ENCODE measurements at regions of chr4 and their contacts with region 1.

Region 1: DNA sequence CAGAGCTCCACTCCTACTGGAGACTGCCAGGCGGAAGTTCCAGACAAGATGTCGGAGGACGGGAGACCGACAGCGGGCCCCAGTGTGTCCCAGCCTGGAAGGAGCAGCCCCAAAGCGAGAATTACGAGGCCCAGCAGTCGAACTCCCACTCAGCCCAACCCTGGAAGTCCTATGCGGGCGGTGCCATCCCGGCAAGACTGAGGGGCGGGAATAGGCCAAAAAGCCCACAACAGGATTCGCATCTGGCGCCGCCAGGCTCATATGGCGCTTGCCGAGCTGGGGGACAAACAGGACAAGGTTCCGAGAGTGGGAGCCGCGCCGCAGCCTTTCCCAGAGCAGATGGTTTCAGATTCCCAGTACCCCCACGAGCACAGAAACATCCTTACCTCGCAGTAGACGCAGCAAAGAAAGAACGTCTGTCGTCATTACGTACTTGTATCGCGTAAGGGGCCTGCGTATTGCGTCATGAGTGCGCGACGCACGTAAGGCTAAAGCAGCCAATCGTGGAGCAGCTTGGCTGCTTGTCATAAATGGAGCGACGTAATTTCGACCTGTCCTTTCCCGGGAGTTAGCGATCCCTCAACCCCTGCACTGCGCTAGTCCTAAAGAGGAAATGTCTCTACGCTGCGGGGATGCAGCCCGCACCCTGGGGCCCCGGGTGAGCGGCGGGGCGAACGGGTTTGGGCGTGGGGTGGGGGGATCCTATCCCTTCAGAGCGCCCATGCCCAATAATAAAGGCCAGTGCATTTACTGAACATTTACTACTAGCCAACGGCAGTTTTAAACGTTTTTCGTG is at the starts of genes LIAS and RPL9:
- DNase-seq: peak; percentile 96
- H3K4me3 Mint-ChIP-seq: peak within 1 kb of the TSS; percentile 93
- H3K27ac Mint-ChIP-seq: peak within 1 kb of the TSS; percentile 97
- H3K4me1 Mint-ChIP-seq: peaks cover 48% of the 10 kb centered on the region
- H3K27me3 Mint-ChIP-seq: peaks cover 1% of the 10 kb centered on the region
- total RNA-seq, gene LIAS: 23.2 to 23.7 TPM
- total RNA-seq, gene RPL9: 2,178 to 2,222 TPM

Region 2: DNA sequence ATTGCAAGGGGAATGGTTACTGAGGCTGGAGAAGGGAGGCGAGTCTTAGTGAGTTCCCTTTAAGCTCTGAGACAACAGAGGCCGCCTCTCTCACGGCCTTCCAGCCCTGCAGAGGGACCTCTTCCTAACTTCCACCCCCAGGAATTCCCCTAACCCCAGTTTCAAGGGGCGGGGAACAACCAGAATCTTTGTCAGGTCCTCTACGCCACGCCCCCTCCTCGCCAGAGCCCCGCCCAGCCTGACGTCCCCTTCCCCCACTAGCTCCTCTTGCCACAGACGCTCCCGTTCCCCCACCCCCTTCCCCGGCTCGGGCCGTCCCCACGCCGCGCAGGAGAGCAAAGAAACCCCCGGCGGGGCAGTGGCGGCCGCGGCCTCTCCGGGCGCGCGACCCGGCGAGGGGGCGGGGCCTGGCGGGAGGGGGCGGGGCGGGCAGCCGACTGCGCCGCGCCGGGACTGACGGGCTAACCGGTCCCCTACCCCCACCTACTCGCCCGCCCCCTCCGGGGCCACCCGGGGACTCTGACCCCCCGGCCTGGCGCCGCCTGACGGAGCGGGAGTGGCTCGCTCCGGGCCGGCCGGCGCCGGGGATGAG is 414.2 kb before region 1 on chr4:
- CTCF ChIA-PET with region 1: no interaction called
- POLR2A ChIA-PET with region 1: no interaction called
- intact Hi-C with region 1: loop called (anchors 1 kb)
- DNase-seq: peak; percentile 99
- H3K4me3 Mint-ChIP-seq: peak overlapping the region; percentile 75
- H3K27ac Mint-ChIP-seq: peak overlapping the region; percentile 88
- H3K4me1 Mint-ChIP-seq: peaks cover 50% of the 10 kb centered on the region
- H3K27me3 Mint-ChIP-seq: no peaks in the 10 kb centered on the region

Region 3: DNA sequence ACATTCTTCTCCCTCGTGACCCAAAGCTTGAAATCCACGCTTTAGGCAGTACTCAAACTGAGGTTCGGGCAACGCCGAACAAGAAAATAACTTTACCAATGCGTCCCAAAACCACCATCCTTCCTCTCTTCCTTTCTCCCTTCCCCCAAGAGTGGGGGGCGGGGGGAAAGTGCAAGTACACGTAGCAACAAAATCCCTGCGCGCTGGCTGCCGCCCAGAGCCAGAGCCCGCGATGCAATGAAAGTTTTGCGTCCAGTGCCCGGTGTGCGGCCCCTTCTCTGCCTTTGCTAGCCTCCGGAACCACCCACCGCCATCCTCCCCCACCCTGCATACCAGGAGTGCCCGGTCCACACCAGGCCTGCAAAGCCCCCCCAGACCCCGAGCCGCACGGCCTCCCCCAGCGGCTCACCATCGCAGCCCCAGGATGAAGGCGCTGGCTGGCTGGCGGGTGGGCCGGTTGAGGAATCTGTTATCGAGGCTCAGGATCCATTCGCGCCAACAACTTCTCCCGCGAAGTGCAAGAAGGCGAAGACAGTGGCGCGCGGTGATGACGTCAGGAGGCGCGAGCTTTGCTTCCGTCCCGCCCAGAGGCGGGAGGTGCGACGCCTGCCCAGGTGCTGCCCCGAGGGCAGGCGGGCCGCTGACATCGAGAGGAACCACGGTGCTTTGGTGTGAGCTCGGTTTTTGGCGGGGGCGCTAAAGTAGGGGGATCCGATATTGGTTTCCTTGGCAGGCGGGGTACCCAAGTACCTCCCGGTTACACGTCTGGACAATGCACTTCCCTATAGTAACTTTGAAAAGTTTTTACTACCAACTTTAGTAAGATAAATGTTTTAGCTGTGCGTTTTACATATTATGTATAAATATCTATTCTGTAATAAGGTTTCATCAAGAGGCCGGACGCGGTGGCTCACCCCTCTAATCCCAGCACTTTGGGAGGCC is 92.6 kb before region 1 on chr4 and contains the start of gene RFC1:
- CTCF ChIA-PET with region 1: no interaction called
- POLR2A ChIA-PET with region 1: interaction called, 10 read pairs
- intact Hi-C with region 1: no loop called
- DNase-seq: peak; percentile 96
- H3K4me3 Mint-ChIP-seq: peak within 1 kb of the TSS; percentile 93
- H3K27ac Mint-ChIP-seq: peak within 1 kb of the TSS; percentile 92
- H3K4me1 Mint-ChIP-seq: peaks cover 42% of the 10 kb centered on the region
- H3K27me3 Mint-ChIP-seq: no peaks in the 10 kb centered on the region
- total RNA-seq, gene RFC1: 86.7 to 89.4 TPM

Region 4: DNA sequence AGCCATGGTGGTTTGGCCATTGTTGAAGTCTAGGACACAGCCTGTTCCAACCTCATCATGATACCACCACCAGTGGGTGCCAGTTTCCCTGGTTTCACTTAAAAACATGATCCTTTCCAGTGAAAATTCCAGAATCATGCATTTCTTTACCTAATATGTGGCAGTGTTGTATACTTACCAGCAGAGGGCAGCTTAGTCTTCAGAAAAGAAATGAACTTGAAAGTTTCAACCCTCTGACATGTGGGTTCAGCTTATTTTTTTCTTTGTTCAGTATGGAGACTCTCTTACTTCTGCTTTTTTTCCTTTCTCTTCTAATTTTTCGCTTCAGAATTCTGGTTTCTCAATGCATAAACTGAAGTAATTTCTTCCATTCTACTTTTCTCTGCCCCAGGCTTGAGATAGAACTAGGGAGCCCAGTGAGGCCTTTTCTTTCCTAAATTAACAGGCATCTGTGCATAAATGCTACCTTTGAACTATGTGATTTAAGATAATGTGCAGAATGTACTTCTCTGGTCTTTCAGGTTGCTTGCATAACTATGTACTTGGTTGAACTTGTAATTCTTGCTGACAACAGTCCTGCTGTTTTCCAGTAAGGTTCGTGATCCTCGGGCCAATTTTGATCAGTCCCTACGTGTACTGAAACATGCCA is 10.8 kb after region 1 on chr4:
- CTCF ChIA-PET with region 1: interaction called, 28 read pairs
- POLR2A ChIA-PET with region 1: interaction called, 3 read pairs
- intact Hi-C with region 1: loop called (anchors 1 kb)
- DNase-seq: peak; percentile 12
- H3K4me3 Mint-ChIP-seq: no peak overlapping the region
- H3K27ac Mint-ChIP-seq: no peak overlapping the region
- H3K4me1 Mint-ChIP-seq: peaks cover 9% of the 10 kb centered on the region
- H3K27me3 Mint-ChIP-seq: no peaks in the 10 kb centered on the region

Region 5: DNA sequence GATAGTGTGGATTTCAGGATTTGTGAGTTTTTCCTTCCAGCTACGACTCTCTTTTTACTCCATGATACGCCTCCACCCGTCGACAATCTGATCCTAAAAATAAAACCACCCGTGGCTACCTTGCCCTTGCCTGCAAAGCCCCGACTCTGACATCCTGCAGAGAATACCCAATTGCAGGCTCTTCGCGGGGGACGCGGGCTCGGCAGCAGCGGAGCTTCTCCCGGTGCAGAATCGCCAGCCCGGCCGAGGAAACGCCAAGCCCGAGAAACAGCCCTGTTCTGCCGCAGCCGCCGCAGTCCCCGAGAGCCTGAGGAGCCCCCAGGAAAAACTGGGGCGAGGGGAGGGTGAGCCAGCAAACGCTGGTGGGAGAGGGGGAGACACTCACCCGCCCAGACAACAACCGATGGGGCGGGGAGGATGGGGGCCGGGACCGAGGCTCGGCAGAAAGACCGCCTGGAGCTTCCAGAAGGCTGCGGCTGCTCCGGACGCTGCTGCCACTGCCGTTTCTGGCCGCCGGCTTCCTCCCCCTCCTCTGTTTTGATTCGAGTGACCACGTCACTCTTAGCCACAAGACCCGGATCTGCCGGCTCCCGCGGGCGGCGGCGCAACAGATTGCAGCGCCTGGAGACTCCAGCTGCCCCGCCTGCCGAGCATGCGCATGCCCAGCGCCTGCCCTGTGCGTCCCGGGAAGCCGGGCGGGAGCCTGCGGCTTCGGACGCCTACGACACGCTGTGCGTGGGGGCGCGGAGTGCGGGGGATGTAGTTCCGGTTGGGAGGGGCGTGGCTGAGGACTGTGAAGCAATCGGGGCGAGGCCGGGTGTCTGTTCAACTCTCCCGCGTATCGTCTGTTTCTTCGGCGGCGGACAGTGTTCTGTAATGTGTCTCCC is 179.9 kb after region 1 on chr4 and contains the start of gene SMIM14:
- CTCF ChIA-PET with region 1: no interaction called
- POLR2A ChIA-PET with region 1: interaction called, 3 read pairs
- intact Hi-C with region 1: loop called (anchors 2 kb)
- DNase-seq: peak; percentile 96
- H3K4me3 Mint-ChIP-seq: peak within 1 kb of the TSS; percentile 93
- H3K27ac Mint-ChIP-seq: peak within 1 kb of the TSS; percentile 63
- H3K4me1 Mint-ChIP-seq: peaks cover 34% of the 10 kb centered on the region
- H3K27me3 Mint-ChIP-seq: no peaks in the 10 kb centered on the region
- total RNA-seq, gene SMIM14: 4.9 to 5.6 TPM

Region 6: DNA sequence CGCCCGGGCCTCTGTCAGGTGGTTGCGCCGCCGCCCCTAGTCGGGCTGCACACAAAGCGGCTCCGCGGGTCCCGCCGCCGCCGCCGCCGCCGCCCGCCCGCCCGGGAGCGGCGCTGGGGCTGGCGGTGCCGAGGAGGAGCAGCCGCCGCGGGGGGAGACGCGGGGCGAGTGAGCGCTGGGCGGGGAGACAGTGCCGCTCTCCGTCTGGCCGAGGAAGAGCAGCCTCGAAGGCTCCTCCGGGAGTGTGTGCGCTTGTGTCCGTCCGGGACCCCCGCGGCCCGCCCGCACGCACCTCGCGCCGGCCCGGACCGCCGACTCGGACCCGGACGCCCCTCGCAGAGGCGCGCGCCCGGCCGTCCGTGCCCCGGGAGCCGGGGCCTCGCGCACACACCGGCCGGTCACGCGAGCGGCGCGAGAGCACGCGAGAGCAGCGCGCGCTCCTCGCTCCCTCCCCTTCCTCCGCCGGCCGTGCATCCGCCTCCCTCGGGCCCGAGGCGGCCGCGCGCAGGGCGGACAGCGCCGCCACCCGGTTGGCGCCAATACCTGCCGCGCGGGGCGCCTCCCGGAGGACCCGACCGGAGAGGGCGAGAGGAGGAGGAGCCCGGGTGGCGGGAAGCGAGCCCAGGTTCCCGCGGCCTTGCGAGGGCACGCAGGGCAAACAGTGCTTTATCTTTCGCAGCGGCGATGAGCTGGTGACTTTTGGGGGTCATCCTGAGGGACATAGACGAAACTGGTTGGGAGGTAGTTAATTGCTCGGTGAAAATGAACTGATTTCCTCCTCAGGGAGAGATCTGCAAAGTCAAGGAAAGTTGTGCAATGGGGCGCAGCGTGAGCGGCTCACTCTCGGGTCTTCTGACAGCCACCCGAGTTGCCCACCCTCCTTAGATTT is 519.0 kb after region 1 on chr4 and contains the start of gene PDS5A:
- CTCF ChIA-PET with region 1: no interaction called
- POLR2A ChIA-PET with region 1: no interaction called
- intact Hi-C with region 1: loop called (anchors 2 kb)
- DNase-seq: peak; percentile 93
- H3K4me3 Mint-ChIP-seq: peak within 1 kb of the TSS; percentile 94
- H3K27ac Mint-ChIP-seq: peak within 1 kb of the TSS; percentile 99
- H3K4me1 Mint-ChIP-seq: peaks cover 38% of the 10 kb centered on the region
- H3K27me3 Mint-ChIP-seq: no peaks in the 10 kb centered on the region
- total RNA-seq, gene PDS5A: 101 to 103 TPM